Astrocyte of the cerebellum (primary cell): ENCODE measurements at regions of chr1 and their contacts with region 1.

Region 1: DNA sequence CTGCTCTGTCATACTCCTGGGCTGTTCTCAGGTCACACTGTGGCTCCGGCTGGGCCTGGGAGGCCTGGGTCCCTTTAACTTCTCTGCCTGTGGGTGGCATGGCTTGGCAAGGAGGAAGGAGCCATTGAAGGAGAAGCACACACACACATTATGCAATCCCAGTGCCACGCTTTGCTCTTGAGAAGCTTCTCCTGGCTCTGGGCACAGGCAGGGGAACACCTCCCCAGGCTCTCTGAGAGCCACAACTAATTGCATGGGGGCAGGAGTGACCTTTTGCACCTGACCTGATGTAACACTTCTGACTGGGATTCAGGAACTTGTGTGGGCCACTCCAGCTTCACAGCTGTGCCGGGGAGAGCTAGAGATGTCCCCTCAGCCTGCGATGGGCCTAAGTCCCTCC is 23.1 kb downstream of the LGR6 start:
- DNase-seq: no peak
- H3K4me3 ChIP-seq: no peak overlapping the region
- CTCF ChIP-seq: no peak

Region 2: GRCh38 chr1:202167708-202168415 is 48.8 kb before region 1 on chr1:
- in situ Hi-C with region 1: no loop called
- DNase-seq: no peak
- H3K4me3 ChIP-seq: no peak overlapping the region
- CTCF ChIP-seq: no peak

Region 3: DNA sequence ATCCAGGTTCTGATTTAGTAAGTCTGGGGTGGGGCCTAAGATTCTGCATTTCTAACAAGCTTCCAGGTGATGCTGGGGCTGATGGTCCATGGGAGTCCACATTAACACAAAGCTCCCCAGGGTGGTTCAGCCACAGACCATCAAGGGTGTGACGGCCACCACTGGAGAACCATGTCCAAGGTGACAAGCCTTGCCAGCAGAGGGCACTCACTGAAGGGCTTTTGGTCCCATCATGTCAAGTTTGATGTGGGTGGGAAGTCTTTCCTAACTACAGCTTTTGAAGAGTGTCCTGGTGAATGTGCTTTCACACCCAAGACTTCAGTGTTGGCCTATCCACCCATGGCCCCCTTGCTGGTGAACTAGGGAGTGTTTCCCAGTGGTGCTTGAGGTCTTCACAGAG is 57.9 kb after region 1 on chr1:
- in situ Hi-C with region 1: loop called (anchors 5 kb)
- DNase-seq: no peak
- H3K4me3 ChIP-seq: no peak overlapping the region
- CTCF ChIP-seq: peak; percentile 47

Region 4: DNA sequence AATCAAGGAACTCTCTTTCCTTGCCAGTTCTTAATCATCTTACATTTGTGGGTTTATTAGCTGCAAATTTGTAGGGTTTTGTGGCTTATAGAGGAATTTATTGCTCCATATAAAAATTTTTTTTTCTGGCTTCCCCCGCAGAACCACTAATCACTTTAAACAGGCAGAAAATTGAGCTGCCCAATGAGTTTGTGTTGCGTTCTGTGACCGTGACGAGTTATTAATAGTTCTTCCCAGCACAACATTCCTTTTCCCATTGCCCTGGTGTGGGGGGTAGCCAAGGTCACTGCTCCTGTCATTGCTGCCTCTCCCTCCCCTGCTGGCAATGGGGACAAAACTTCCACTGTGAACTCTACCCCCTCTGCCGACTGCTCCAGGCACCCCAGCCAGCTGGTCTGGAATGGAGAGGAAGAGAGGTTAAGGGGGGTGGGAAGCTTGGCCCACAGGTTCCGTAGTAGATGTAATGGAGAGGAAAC is 70.0 kb after region 1 on chr1:
- in situ Hi-C with region 1: no loop called
- DNase-seq: peak; percentile 68
- H3K4me3 ChIP-seq: no peak overlapping the region
- CTCF ChIP-seq: peak; percentile 24